ENCODE measurements at regions of chr1 and their contacts with region 1.

Region 1: GRCh38 chr1:43934101-43934985 is 742 bp downstream of the ARTN start:
- DNase-seq: peak; percentile 92
- ATAC-seq: peak; percentile 60
- H3K4me3 Mint-ChIP-seq: peak overlapping the region; percentile 84
- H3K27ac Mint-ChIP-seq: peak overlapping the region; percentile 88
- H3K4me1 Mint-ChIP-seq: peaks cover 54% of the 10 kb centered on the region
- H3K27me3 Mint-ChIP-seq: peaks cover 8% of the 10 kb centered on the region
- CTCF ChIP-seq: peak; percentile 78

Region 2: DNA sequence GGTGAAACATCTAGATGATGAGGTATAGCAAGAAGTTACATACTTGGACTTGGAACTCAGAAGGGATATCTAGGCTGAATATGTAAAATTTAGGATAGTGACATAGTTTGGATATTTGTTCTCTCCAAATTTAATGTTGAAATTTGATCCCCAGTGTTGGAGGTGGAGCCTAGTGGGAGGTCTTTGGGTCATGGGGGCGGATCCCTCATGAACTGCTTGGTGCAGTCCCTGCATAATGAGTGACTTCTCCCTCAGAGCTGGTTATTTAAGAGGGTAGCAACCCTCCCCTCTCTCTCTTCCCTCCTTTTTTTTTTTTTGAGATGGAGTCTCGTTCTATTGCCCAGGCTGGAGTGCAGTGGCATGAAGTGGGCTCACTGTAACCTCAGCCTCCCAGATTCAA is 211.5 kb before region 1 on chr1:
- CTCF ChIA-PET with region 1: interaction called, 12 read pairs
- POLR2A ChIA-PET with region 1: no interaction called
- DNase-seq: peak; percentile 16
- ATAC-seq: peak; percentile 69
- H3K4me3 Mint-ChIP-seq: no peak overlapping the region
- H3K27ac Mint-ChIP-seq: 0 out of 2 replicates have a peak overlapping the region, but pooled peaks have one; percentile 0
- H3K4me1 Mint-ChIP-seq: peaks cover 7% of the 10 kb centered on the region
- H3K27me3 Mint-ChIP-seq: no peaks in the 10 kb centered on the region
- CTCF ChIP-seq: no peak

Region 3: DNA sequence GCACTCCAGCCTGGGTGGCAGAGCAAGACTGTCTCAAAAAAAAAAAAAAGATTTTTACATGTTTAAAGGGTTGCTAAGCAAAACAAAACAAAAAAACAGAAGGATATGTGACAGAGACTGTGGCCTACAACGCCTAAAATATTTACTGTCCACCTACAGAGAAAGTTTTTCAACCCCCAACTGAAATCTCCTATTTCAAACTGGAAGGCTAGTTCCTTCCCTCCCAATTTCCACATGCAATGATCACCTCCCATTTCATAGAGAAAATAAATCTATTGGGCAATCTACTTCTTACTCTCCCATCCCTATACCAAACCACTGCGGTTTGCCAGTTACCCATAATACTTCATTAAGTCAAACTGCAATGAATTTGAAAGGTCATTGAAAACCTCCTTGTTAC is 152.8 kb before region 1 on chr1:
- CTCF ChIA-PET with region 1: interaction called, 14 read pairs
- POLR2A ChIA-PET with region 1: no interaction called
- DNase-seq: no peak
- ATAC-seq: no peak
- H3K4me3 Mint-ChIP-seq: no peak overlapping the region
- H3K27ac Mint-ChIP-seq: no peak overlapping the region
- H3K4me1 Mint-ChIP-seq: peaks cover 13% of the 10 kb centered on the region
- H3K27me3 Mint-ChIP-seq: no peaks in the 10 kb centered on the region; the same call in 1 of the 2 replicates
- CTCF ChIP-seq: no peak

Region 4: DNA sequence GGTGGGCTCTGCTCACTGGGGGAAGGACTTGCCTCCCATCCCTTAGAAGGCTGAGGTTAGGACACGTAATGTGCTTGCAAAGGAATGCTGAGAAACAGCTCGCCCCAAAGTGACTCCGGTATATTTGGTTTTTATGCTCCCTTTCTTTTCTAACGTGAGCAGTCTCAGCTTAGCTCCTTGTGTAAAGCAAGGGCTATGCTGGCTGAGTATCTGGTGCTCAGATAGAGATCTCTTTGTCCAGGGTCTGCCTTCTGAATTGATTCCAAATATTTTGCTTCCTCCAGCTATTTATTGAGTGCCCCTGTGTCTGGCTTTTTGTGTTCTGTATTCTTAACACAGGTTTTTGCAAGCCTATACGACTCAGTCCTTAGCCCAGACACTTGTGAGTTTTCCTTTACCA is 95.3 kb before region 1 on chr1:
- CTCF ChIA-PET with region 1: interaction called, 27 read pairs
- POLR2A ChIA-PET with region 1: no interaction called
- DNase-seq: no peak
- ATAC-seq: no peak
- H3K4me3 Mint-ChIP-seq: no peak overlapping the region
- H3K27ac Mint-ChIP-seq: peak overlapping the region; percentile 55; the same call in 1 of the 2 replicates
- H3K4me1 Mint-ChIP-seq: peaks cover 74% of the 10 kb centered on the region
- H3K27me3 Mint-ChIP-seq: peaks cover 3% of the 10 kb centered on the region; the same call in 1 of the 2 replicates
- CTCF ChIP-seq: no peak

Region 5: GRCh38 chr1:43902058-43902831 is 32.1 kb before region 1 on chr1:
- CTCF ChIA-PET with region 1: interaction called, 28 read pairs
- POLR2A ChIA-PET with region 1: interaction called, 3 read pairs
- DNase-seq: no peak
- ATAC-seq: no peak
- H3K4me3 Mint-ChIP-seq: no peak overlapping the region
- H3K27ac Mint-ChIP-seq: no peak overlapping the region
- H3K4me1 Mint-ChIP-seq: no peaks in the 10 kb centered on the region
- H3K27me3 Mint-ChIP-seq: peaks cover 29% of the 10 kb centered on the region
- CTCF ChIP-seq: no peak

Region 6: DNA sequence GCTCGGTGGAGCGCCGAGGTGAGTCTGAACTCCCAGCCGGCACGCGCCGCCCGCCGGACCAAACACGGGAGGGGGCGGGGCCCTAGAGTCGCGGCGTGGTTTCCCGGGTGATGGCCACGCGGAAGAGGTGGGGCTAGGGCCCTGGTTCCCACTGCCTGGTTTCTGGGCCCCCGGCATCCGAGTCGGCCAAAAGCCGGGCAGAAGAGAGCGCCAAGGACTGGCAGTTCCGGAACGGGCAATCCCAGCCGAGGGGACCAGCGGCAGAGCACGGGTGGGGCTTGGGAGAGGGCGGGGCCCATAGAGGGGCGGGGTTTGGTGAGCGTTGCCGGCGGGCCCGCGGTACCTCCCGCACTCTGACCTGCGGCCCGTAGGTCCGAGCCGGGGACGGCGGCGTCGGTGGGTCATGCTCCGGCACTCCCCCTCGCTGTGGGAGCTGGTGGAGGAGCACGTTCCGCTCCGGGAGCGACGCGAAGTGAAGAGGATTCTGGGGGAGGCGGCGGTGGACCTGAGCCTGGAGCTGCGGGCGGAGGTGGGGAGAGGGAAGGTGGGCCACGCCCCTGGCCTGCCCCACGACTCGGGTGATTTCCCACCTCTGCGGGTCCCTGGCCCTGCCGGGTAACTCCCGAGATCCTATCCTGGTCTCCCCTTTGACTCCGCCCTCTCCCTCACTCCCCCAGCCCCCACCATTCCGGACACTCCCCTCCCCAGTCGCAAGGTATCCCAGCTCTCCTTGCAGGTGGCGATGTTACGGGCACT is 57.3 kb after region 1 on chr1 and contains the start of gene CCDC24:
- CTCF ChIA-PET with region 1: interaction called, 13 read pairs
- POLR2A ChIA-PET with region 1: no interaction called
- DNase-seq: peak; percentile 82
- ATAC-seq: peak; percentile 70
- H3K4me3 Mint-ChIP-seq: peak within 1 kb of the TSS; percentile 86
- H3K27ac Mint-ChIP-seq: peak within 1 kb of the TSS; percentile 93
- H3K4me1 Mint-ChIP-seq: peaks cover 22% of the 10 kb centered on the region
- H3K27me3 Mint-ChIP-seq: peaks cover 18% of the 10 kb centered on the region
- CTCF ChIP-seq: no peak
- total RNA-seq, gene CCDC24: 12.1 to 20.1 TPM (median 19.2 TPM) in 3 replicates

Measured in WTC11 (cell line).